ENCODE measurements at regions of chr11 and their contacts with region 1.

Region 1: DNA sequence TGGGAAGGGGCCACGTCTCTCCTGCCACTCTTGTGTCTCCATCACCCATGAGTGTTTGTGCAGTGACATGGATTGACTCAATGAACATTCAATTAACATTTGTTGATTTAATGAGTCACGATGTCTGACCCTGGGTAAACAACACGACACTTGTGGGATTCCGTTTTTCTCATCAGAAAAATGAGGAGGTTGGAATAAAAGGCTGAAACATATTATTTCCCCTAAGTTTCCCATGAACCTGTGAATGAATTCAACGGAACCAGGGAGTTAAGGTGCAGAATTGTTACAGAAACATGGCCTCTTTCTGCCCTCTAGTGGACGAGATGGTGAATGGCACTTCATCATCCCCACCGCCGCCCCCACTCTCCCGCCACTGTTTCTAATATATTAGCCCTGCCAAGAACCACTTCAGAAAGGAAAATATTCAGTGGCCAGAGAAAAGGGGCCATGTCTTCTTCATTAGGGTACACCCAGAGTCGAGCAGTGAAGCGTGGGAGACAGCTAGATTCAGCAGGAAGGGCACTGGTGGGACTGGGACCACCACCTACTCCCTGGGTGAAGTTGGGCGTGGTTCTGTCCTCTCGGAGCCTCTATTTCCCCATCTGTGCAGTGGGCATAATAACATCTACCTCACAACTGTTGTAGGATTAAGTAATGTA is 46.3 kb upstream of the SYT13 start:
- DNase-seq: no peak
- ATAC-seq: peak; percentile 59

Region 2: GRCh38 chr11:44936525-44936924 is 395.9 kb before region 1 on chr11:
- intact Hi-C with region 1: loop called (anchors 5 kb)
- DNase-seq: peak; percentile 90
- ATAC-seq: peak; percentile 49

Region 3: DNA sequence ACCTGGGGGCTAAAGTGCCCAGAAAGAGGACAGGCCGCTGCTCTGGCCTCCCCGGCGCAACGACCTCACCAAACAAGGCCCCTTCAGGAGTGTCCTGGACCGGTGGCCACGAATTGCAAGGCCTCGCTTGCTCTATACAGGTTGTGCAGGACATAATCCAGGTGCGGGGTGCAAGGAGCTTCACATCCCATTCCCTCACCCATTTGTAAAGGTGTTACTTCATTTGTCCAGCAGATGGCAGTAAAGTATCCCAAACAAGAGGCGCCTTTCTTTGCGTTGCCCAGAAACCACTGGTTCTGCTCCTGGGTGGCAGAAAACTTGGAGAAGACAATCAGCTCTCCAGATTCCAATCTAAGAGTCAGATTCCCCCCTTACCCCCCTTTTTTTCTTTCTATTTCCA is 221.8 kb before region 1 on chr11:
- intact Hi-C with region 1: loop called (anchors 1 kb)
- DNase-seq: no peak
- ATAC-seq: peak; percentile 58

Region 4: DNA sequence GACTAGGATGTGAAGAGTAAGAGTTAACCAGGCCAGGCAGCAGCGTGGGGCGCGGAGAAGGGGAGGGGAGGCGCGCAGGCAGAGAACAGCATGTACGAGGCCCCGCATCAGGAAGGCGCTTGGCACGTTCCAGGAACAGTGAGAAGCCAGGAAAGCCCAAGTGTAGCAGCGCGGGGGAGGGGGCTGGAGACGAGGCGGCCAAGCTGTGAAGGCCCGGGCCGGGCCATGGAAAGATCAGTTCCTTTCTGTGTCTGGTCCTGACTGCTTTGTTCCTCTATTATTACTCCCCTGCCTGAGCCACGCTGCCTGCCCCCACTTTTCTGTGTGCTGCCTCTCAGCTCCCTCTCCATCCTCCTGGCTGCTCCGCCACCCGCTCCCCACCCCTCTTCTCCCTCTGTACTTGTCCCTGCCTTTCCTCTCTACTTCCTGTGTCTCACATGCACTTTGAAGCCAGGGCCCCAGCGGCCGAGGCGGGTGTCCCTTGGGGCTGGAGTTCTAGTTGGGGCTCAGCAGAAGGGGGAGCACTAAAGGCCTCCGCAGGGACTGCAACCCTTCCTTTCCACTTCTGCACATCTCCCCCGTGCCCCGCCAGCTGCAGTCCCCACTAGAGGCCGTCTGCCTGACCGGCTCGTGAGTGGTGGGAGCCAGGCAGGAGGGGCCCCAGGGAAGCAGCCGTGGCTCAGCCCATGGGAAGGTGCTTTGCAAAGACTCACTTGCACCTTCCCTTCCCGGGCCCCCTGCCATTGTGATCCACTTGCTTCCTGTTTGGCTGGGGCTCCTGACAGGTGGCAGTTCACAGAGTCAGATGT is 122.3 kb before region 1 on chr11:
- intact Hi-C with region 1: loop called (anchors 2 kb)
- DNase-seq: peak; percentile 94
- ATAC-seq: peak; percentile 96

Region 5: GRCh38 chr11:45252134-45252855 is 80.1 kb before region 1 on chr11:
- intact Hi-C with region 1: loop called (anchors 2 kb)
- DNase-seq: peak; percentile 82
- ATAC-seq: peak; percentile 84

Region 6: DNA sequence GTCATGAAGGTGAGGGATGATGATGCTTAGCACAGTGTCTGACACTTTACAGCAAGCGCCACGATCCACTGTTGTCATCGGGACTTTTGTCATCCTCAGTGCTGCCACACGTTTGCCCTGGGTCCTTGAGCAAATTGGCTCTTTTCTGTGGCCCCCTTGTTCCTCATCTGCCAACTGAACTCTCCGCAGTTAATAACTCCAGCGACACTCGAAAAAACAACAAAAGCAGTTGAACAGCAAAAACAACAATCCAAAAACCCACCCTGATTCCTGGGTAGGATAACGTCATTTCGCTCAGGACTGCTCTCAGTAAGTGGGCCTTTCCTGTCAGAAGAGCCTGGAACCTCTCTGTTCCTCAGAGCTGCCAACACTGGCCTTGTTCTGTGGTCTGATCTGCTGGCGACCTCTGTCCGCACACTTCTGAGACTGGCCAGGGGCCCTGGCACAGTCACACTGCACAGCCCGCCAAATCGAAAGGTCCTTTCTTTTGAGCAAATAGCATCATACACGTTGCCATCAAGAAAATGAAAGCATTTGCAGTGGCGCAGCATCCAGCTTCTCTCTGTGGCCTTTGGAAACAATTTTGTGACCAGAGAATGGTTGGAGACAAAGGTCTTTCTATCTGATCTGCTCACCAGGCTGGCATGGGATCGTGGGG is 33.7 kb after region 1 on chr11:
- intact Hi-C with region 1: no loop called
- DNase-seq: no peak
- ATAC-seq: peak; percentile 60

Measured in Right ventricle myocardium inferior (tissue), 1 donor.